ENCODE measurements at regions of chr2 and their contacts with region 1.

Region 1: GRCh38 chr2:176653479-176654443 is 384.5 kb downstream of the MTX2 start:
- DNase-seq: peak; percentile 81
- H3K4me3 Mint-ChIP-seq: no peak overlapping the region
- H3K27ac Mint-ChIP-seq: no peak overlapping the region
- H3K4me1 Mint-ChIP-seq: peaks cover 5% of the 10 kb centered on the region
- H3K27me3 Mint-ChIP-seq: peaks cover 29% of the 10 kb centered on the region
- CTCF ChIP-seq: peak; percentile 73

Region 2: DNA sequence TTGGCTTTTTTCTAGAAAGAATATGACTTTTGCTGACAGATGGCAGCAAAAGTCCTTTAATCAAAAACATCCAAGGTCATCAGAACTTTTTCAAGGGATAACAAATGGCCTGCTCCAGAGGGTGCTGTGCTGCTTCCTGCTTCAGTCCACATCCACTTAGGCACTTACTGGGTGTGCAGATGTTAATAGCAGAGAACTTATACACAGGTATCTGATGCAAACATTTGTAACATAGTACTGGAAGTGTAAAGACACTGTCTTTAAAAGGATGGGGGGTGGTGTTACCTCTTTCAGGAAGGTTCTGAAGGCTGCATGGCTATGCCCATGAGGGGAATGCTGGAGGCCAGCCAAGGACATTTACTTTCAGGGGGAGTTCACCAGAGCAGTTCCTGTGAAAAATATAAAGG is 518.7 kb before region 1 on chr2:
- CTCF ChIA-PET with region 1: interaction called, 84 read pairs
- POLR2A ChIA-PET with region 1: no interaction called
- intact Hi-C with region 1: loop called (anchors 1 kb)
- DNase-seq: no peak
- H3K4me3 Mint-ChIP-seq: no peak overlapping the region
- H3K27ac Mint-ChIP-seq: peak overlapping the region; percentile 53
- H3K4me1 Mint-ChIP-seq: no peaks in the 10 kb centered on the region
- H3K27me3 Mint-ChIP-seq: no peaks in the 10 kb centered on the region
- CTCF ChIP-seq: no peak

Region 3: GRCh38 chr2:176151442-176152369 is 502.1 kb before region 1 on chr2 and contains the start of gene HOXD4:
- CTCF ChIA-PET with region 1: interaction called, 10 read pairs
- POLR2A ChIA-PET with region 1: no interaction called
- intact Hi-C with region 1: no loop called
- DNase-seq: no peak
- H3K4me3 Mint-ChIP-seq: no peak within 1 kb of the TSS
- H3K27ac Mint-ChIP-seq: no peak within 1 kb of the TSS
- H3K4me1 Mint-ChIP-seq: no peaks in the 10 kb centered on the region
- H3K27me3 Mint-ChIP-seq: no peaks in the 10 kb centered on the region
- CTCF ChIP-seq: no peak
- total RNA-seq, gene HOXD4: not detected in 2 replicates

Region 4: GRCh38 chr2:176500901-176501300 is 152.9 kb before region 1 on chr2:
- CTCF ChIA-PET with region 1: no interaction called
- POLR2A ChIA-PET with region 1: no interaction called
- intact Hi-C with region 1: no loop called
- DNase-seq: no peak
- H3K4me3 Mint-ChIP-seq: no peak overlapping the region
- H3K27ac Mint-ChIP-seq: no peak overlapping the region
- H3K4me1 Mint-ChIP-seq: peaks cover 2% of the 10 kb centered on the region
- H3K27me3 Mint-ChIP-seq: no peaks in the 10 kb centered on the region
- CTCF ChIP-seq: no peak

Region 5: GRCh38 chr2:176643646-176644045 is 10.1 kb before region 1 on chr2:
- CTCF ChIA-PET with region 1: interaction called, 53 read pairs
- POLR2A ChIA-PET with region 1: interaction called, 3 read pairs
- intact Hi-C with region 1: no loop called
- DNase-seq: no peak
- H3K4me3 Mint-ChIP-seq: no peak overlapping the region
- H3K27ac Mint-ChIP-seq: no peak overlapping the region
- H3K4me1 Mint-ChIP-seq: peaks cover 6% of the 10 kb centered on the region
- H3K27me3 Mint-ChIP-seq: no peaks in the 10 kb centered on the region
- CTCF ChIP-seq: no peak

Region 6: GRCh38 chr2:176669398-176670174 is 15.8 kb after region 1 on chr2:
- CTCF ChIA-PET with region 1: interaction called, 17 read pairs
- POLR2A ChIA-PET with region 1: no interaction called
- intact Hi-C with region 1: no loop called
- DNase-seq: no peak
- H3K4me3 Mint-ChIP-seq: no peak overlapping the region
- H3K27ac Mint-ChIP-seq: no peak overlapping the region
- H3K4me1 Mint-ChIP-seq: peaks cover 4% of the 10 kb centered on the region
- H3K27me3 Mint-ChIP-seq: no peaks in the 10 kb centered on the region
- CTCF ChIP-seq: no peak

Region 7: DNA sequence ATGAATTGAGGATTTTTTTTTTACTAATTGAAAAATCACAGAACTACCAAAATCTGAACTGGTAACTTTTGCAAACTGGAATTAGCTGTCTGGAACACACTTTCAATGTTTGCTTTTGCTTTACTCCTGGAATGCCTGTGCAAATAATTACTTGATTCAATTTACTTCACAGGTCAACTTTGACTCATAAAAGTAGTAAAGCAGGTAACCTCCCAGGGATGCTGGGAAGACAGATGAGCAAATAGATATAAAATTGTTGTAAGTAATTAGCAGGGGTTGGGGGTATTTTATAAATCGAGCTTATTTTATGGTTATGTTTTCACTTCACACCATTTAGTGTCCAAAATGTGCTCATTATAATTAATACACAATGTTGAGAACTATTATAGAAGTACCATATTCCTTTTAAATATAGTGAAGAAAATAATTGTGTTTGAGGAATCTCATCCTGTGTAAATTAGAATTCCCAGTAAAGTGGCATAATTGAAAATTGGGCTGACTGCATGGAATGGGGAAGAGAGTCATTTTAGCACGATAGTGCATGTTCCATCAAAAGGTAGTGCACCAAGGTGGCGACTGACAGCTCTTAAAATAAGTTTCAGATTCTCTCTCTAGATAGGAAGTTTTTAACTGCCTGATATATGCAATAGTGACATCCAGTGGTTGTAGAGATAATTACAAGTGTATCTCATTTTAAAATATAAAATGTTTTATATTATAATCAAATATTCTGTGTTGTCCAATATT is 160.7 kb after region 1 on chr2:
- CTCF ChIA-PET with region 1: interaction called, 64 read pairs
- POLR2A ChIA-PET with region 1: interaction called, 8 read pairs
- intact Hi-C with region 1: loop called (anchors 2 kb)
- DNase-seq: peak; percentile 38
- H3K4me3 Mint-ChIP-seq: no peak overlapping the region
- H3K27ac Mint-ChIP-seq: no peak overlapping the region
- H3K4me1 Mint-ChIP-seq: no peaks in the 10 kb centered on the region
- H3K27me3 Mint-ChIP-seq: peaks cover 12% of the 10 kb centered on the region
- CTCF ChIP-seq: peak; percentile 59

Measured in MCF 10A (cell line).